ENCODE measurements at regions of chr10 and their contacts with region 1.

Region 1: GRCh38 chr10:114550756-114551635 is 107.1 kb downstream of the ABLIM1 start:
- DNase-seq: no peak
- H3K4me3 ChIP-seq: no peak overlapping the region
- H3K4me3 Mint-ChIP-seq: no peak overlapping the region
- H3K27ac Mint-ChIP-seq: no peak overlapping the region
- H3K4me1 ChIP-seq: no peaks in the 10 kb centered on the region
- H3K4me1 Mint-ChIP-seq: no peaks in the 10 kb centered on the region
- H3K27me3 ChIP-seq: no peaks in the 10 kb centered on the region
- H3K27me3 Mint-ChIP-seq: no peaks in the 10 kb centered on the region
- CTCF ChIP-seq: peak in 1 of 2 experiments; percentile 62

Region 2: DNA sequence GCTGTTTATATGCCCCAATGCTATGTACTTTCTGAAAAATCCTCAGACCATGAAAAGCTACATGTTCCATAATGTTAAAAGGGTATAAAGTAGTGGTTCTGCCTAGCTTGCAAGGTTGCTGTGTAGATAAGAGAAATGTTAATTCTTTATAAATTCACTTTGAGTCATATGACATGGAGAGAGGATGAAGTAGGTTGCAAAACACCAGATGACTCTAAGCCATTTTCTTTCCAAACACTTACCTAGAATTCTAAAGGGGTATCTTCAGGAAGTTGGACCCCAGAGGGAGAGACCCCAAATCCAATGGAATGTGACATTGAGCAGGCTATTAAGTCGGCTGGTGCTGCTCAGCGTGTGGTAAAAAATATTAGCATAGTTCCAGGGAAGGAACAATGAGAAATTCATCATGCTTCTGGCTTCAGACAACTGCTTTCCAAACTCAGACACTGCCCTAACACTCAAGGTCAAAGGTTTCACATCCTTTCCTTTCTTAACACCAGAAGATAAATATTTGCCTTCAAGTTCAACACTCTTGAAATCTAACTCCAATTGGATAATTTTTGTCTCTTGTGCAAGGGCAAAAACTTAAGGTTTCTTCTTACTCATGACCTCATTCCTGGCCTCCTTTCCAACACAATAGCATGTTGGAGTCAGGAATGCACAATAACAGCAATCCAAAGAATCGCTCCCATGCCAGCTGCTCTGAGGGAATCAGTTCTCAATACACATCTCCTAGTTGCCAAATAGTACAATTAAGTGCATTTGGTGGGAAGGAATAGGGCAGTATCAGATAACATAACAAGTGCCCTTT is 46.0 kb before region 1 on chr10:
- CTCF ChIA-PET with region 1: no interaction called
- POLR2A ChIA-PET with region 1: no interaction called
- intact Hi-C with region 1: loop called (anchors 1 kb)
- DNase-seq: peak in 1 of 2 experiments; percentile 50
- H3K4me3 ChIP-seq: no peak overlapping the region
- H3K4me3 Mint-ChIP-seq: no peak overlapping the region
- H3K27ac Mint-ChIP-seq: peak overlapping the region; percentile 3
- H3K4me1 ChIP-seq: peaks cover 18% of the 10 kb centered on the region
- H3K4me1 Mint-ChIP-seq: peaks cover 14% of the 10 kb centered on the region
- H3K27me3 ChIP-seq: no peaks in the 10 kb centered on the region
- H3K27me3 Mint-ChIP-seq: no peaks in the 10 kb centered on the region
- CTCF ChIP-seq: no peak

Region 3: DNA sequence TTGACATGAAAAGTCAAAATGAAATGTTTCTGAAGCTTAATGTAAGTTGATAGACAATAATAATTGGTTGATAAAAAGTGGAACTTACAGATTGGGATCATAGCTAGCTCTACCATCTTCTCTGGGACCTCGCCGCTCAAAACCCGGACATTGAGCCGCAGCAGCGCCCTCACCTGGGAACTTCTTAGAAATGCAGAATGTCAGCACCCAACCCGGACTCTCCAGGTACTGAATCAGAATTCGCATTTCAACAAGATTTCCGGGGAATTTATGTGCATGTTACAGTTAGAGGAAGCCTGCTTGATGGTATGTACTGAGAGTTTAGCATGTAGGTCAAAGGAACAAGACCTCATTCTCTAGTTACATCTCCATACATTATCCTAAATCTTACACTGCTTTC is 143.8 kb after region 1 on chr10:
- CTCF ChIA-PET with region 1: interaction called, 6 read pairs
- POLR2A ChIA-PET with region 1: no interaction called
- intact Hi-C with region 1: loop called (anchors 1 kb)
- DNase-seq: peak; percentile 55 to 69
- H3K4me3 ChIP-seq: no peak overlapping the region
- H3K4me3 Mint-ChIP-seq: no peak overlapping the region
- H3K27ac Mint-ChIP-seq: no peak overlapping the region
- H3K4me1 ChIP-seq: no peaks in the 10 kb centered on the region
- H3K4me1 Mint-ChIP-seq: peaks cover 6% of the 10 kb centered on the region
- H3K27me3 ChIP-seq: no peaks in the 10 kb centered on the region
- H3K27me3 Mint-ChIP-seq: no peaks in the 10 kb centered on the region
- CTCF ChIP-seq: peak; percentile 69 to 74

Region 4: DNA sequence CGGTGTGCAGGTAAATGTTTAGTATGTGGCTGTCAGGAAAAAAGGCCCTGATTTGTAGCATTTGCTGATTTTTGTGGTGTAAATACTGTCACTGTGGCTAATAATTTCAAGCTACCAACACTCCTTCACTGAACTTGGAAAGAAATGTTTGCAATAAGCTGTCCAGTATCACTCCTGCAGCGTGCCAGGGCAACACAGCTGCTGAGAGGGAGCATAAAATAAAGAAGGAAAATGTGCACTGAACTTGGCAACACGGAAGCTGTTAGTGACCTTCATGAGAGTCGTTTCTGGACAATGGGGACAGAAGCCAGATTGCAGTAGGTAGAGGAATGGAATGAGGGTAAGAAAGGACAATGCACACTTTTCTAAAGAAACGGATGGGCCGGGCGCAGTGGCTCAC is 232.7 kb after region 1 on chr10:
- CTCF ChIA-PET with region 1: no interaction called
- POLR2A ChIA-PET with region 1: no interaction called
- intact Hi-C with region 1: loop called (anchors 1 kb)
- DNase-seq: no peak
- H3K4me3 ChIP-seq: no peak overlapping the region
- H3K4me3 Mint-ChIP-seq: no peak overlapping the region
- H3K27ac Mint-ChIP-seq: no peak overlapping the region
- H3K4me1 ChIP-seq: no peaks in the 10 kb centered on the region
- H3K4me1 Mint-ChIP-seq: no peaks in the 10 kb centered on the region
- H3K27me3 ChIP-seq: no peaks in the 10 kb centered on the region
- H3K27me3 Mint-ChIP-seq: peaks cover 2% of the 10 kb centered on the region
- CTCF ChIP-seq: no peak